ENCODE measurements at regions of chr9 and their contacts with region 1.

Region 1: DNA sequence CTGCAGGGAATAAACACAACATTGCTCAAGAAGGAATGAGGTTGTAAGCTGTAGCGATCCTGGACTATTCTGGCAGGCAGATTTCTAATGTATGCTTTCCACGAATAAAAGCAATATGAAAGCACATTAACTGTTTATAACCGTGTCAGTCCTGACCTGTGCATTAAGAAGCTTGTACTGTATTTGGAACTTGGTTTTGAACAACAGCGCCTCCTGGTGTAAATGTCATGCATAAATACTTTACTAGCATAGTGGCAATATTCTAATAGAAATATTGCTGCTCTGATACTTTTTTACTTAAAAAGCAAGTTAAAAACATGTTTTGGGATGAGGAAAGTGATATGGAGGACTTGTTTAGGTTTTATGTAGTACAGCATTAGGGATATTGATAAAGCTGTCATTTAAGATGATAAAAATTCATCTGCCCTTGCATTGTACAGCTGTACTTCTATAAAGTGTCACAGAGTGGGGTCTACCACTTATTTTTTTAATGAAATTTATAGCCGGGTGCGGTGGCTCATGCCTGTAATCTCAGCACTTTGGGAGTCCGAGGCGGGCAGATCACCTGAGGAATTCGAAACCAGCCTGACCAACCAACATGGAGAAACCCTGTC is 70.7 kb upstream of the GNE start:
- DNase-seq: peak; percentile 76 to 88 (median 81)
- H3K4me3 ChIP-seq: peak overlapping the region in 1 of 7 experiments; percentile 57
- H3K27ac ChIP-seq: no peak overlapping the region
- H3K4me1 ChIP-seq: peaks cover 0 to 2% (median 0%) of the 10 kb centered on the region in 4 experiments
- H3K27me3 ChIP-seq: no peaks in the 10 kb centered on the region

Region 2: DNA sequence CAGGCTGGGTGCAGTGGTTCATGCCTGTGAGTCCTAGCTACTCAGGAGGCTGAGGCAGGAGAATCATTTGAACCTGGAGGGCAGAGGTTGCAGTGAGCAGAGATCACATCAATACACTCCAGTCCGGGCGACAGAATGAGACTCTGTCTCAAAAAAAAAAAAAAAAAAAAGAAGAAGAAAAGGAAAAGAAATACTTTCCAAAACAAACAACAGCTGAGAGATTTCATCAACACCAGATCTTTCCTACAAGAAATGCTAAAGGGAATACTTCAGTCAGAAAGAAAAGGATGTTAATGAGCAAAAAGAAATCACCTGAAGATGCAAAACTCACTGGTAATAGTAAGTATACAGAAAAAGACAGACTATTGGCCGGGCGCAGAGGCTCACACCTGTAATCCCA is 151.3 kb before region 1 on chr9:
- CTCF ChIA-PET with region 1: no interaction called
- POLR2A ChIA-PET with region 1: no interaction called
- DNase-seq: no peak
- H3K4me3 ChIP-seq: no peak overlapping the region
- H3K27ac ChIP-seq: no peak overlapping the region
- H3K4me1 ChIP-seq: no peaks in the 10 kb centered on the region
- H3K27me3 ChIP-seq: no peaks in the 10 kb centered on the region

Region 3: GRCh38 chr9:36250079-36250478 is 78.8 kb before region 1 on chr9:
- CTCF ChIA-PET with region 1: interaction called, 112 read pairs
- POLR2A ChIA-PET with region 1: interaction called, 3 read pairs
- DNase-seq: no peak
- H3K4me3 ChIP-seq: no peak overlapping the region
- H3K27ac ChIP-seq: no peak overlapping the region
- H3K4me1 ChIP-seq: no peaks in the 10 kb centered on the region
- H3K27me3 ChIP-seq: no peaks in the 10 kb centered on the region